Sciatic nerve (tissue), 2 donors: ENCODE measurements at regions of chr15 and their contacts with region 1.

Region 1: GRCh38 chr15:40382580-40383456 is at the start of gene KNSTRN:
- DNase-seq: peak; percentile 94
- ATAC-seq: peak; percentile 98
- total RNA-seq, gene KNSTRN: 6.4 TPM

Region 2: GRCh38 chr15:40405501-40406381 is 22.9 kb after region 1 on chr15 and contains the start of gene IVD:
- intact Hi-C with region 1: loop called (anchors 2 kb)
- DNase-seq: peak; percentile 97
- ATAC-seq: peak; percentile 100
- total RNA-seq, gene IVD: 67.8 TPM